ENCODE measurements at regions of chr14 and their contacts with region 1.

Region 1: GRCh38 chr14:106210652-106211051 is 684.3 kb downstream of the TMEM121 start:
- DNase-seq: peak in 4 of 9 experiments; percentile 21 to 32 (median 26)
- ATAC-seq: peak; percentile 34
- H3K4me3 ChIP-seq: no peak overlapping the region
- H3K4me3 Mint-ChIP-seq: no peak overlapping the region
- H3K27ac ChIP-seq: no peak overlapping the region
- H3K27ac Mint-ChIP-seq: no peak overlapping the region
- H3K4me1 ChIP-seq: peaks cover 6% of the 10 kb centered on the region
- H3K4me1 Mint-ChIP-seq: peaks cover 15% of the 10 kb centered on the region
- H3K27me3 ChIP-seq: no peaks in the 10 kb centered on the region
- H3K27me3 Mint-ChIP-seq: peaks cover 4% of the 10 kb centered on the region
- CTCF ChIP-seq: no peak

Region 2: GRCh38 chr14:105817971-105818711 is 392.5 kb before region 1 on chr14:
- CTCF ChIA-PET with region 1: no interaction called
- POLR2A ChIA-PET with region 1: no interaction called
- intact Hi-C with region 1: no loop called
- DNase-seq: peak in 3 of 9 experiments; percentile 17 to 43 (median 19)
- ATAC-seq: peak; percentile 42
- H3K4me3 ChIP-seq: no peak overlapping the region
- H3K4me3 Mint-ChIP-seq: no peak overlapping the region
- H3K27ac ChIP-seq: no peak overlapping the region
- H3K27ac Mint-ChIP-seq: peak overlapping the region; percentile 79
- H3K4me1 ChIP-seq: no peaks in the 10 kb centered on the region
- H3K4me1 Mint-ChIP-seq: no peaks in the 10 kb centered on the region
- H3K27me3 ChIP-seq: no peaks in the 10 kb centered on the region
- H3K27me3 Mint-ChIP-seq: peaks cover 22% of the 10 kb centered on the region
- CTCF ChIP-seq: no peak

Region 3: DNA sequence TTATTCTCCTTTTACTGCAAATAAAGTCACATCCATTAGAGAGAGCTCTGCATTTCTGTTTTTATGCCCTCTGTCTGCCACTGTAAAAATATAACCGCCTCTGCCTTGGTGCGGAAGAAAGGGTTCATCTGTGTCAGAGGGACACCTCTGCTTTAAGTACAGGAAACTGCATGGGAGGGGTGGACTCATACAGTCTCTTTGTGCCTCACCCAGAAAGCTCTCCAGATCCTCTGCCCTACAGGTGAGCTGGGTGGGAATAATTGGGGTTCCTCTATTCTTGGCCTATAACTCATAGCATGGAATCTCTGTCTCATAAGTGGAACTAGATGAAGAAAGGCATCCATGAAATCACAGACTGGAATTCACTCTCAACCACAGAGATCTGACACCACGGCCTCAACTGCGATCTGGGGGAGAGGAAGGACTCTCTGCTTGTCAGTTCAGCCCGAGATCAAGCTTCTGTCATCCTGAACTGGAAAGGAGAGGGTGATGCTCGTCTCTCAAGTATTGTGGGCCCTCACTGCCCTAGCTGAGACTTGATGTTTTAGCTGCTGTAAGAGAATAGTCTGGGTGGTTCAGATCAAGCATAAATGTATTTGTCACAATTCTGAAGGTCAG is 18.0 kb after region 1 on chr14:
- CTCF ChIA-PET with region 1: interaction called, 42 read pairs
- POLR2A ChIA-PET with region 1: interaction called, 4 read pairs
- intact Hi-C with region 1: no loop called
- DNase-seq: peak in 8 of 9 experiments; percentile 21 to 74 (median 42)
- ATAC-seq: peak; percentile 95
- H3K4me3 ChIP-seq: peak overlapping the region; percentile 16 to 36
- H3K4me3 Mint-ChIP-seq: peak overlapping the region; percentile 87
- H3K27ac ChIP-seq: peak overlapping the region; percentile 45 to 64
- H3K27ac Mint-ChIP-seq: peak overlapping the region; percentile 97
- H3K4me1 ChIP-seq: peaks cover 54% of the 10 kb centered on the region
- H3K4me1 Mint-ChIP-seq: peaks cover 55% of the 10 kb centered on the region
- H3K27me3 ChIP-seq: no peaks in the 10 kb centered on the region
- H3K27me3 Mint-ChIP-seq: no peaks in the 10 kb centered on the region
- CTCF ChIP-seq: no peak

Region 4: DNA sequence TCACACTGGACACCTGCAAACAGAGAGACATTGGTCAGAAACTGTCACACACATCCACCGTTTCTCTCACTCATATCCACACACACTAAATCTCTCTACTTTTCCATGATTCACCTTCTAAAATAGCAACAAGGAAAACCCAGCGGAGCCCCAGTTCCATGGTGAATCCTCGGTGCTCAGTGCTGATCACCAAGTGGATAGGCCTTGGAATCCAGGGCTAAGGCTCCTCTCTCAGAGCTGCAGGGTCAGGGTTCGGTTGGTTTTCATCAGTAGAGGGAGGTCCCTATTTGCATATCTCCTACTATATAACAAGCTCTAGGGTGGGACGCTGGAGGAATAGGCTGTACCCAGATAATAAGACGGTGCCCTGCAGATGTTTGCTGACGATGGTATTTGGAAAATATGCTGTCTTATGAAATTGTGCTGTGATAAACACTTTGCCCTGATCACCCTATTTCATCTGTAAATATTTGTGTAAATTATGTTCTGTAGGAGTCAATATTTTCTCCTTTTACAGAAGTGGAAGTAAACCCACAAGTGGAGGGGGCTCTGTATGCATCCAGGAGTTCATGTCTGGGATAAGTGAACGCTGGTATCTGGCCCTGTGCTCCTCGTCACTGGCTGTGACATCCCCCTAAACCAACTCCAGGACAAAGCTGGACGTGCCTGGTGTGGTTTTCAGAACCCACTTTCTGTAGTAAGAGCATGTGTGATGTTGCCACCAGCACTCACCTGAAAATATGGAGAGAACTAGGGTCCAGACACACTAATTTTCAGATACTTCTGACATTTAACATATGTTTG is 24.9 kb after region 1 on chr14:
- CTCF ChIA-PET with region 1: interaction called, 42 read pairs
- POLR2A ChIA-PET with region 1: interaction called, 3 read pairs
- intact Hi-C with region 1: loop called in 1 of 2 experiments (anchors 1 kb)
- DNase-seq: no peak
- ATAC-seq: no peak
- H3K4me3 ChIP-seq: no peak overlapping the region
- H3K4me3 Mint-ChIP-seq: no peak overlapping the region
- H3K27ac ChIP-seq: no peak overlapping the region
- H3K27ac Mint-ChIP-seq: no peak overlapping the region
- H3K4me1 ChIP-seq: peaks cover 19% of the 10 kb centered on the region
- H3K4me1 Mint-ChIP-seq: peaks cover 24% of the 10 kb centered on the region
- H3K27me3 ChIP-seq: no peaks in the 10 kb centered on the region
- H3K27me3 Mint-ChIP-seq: no peaks in the 10 kb centered on the region
- CTCF ChIP-seq: no peak

Region 5: GRCh38 chr14:106268013-106268727 is 57.5 kb after region 1 on chr14:
- CTCF ChIA-PET with region 1: interaction called, 5 read pairs
- POLR2A ChIA-PET with region 1: no interaction called
- intact Hi-C with region 1: loop called in 1 of 2 experiments (anchors 1 kb)
- DNase-seq: peak; percentile 54 to 91 (median 81)
- ATAC-seq: peak; percentile 84
- H3K4me3 ChIP-seq: no peak overlapping the region
- H3K4me3 Mint-ChIP-seq: no peak overlapping the region
- H3K27ac ChIP-seq: no peak overlapping the region
- H3K27ac Mint-ChIP-seq: no peak overlapping the region
- H3K4me1 ChIP-seq: peaks cover 5% of the 10 kb centered on the region
- H3K4me1 Mint-ChIP-seq: peaks cover 6% of the 10 kb centered on the region
- H3K27me3 ChIP-seq: no peaks in the 10 kb centered on the region
- H3K27me3 Mint-ChIP-seq: no peaks in the 10 kb centered on the region
- CTCF ChIP-seq: peak; percentile 17

Region 6: GRCh38 chr14:106343626-106344025 is 133.0 kb after region 1 on chr14:
- CTCF ChIA-PET with region 1: no interaction called
- POLR2A ChIA-PET with region 1: no interaction called
- intact Hi-C with region 1: no loop called
- DNase-seq: no peak
- ATAC-seq: no peak
- H3K4me3 ChIP-seq: no peak overlapping the region
- H3K4me3 Mint-ChIP-seq: no peak overlapping the region
- H3K27ac ChIP-seq: no peak overlapping the region
- H3K27ac Mint-ChIP-seq: no peak overlapping the region
- H3K4me1 ChIP-seq: no peaks in the 10 kb centered on the region
- H3K4me1 Mint-ChIP-seq: no peaks in the 10 kb centered on the region
- H3K27me3 ChIP-seq: no peaks in the 10 kb centered on the region
- H3K27me3 Mint-ChIP-seq: peaks cover 30% of the 10 kb centered on the region
- CTCF ChIP-seq: no peak